ENCODE measurements at regions of chr4 and their contacts with region 1.

Region 1: GRCh38 chr4:101730291-101731117 is 60.0 kb upstream of the BANK1 start:
- DNase-seq: peak; percentile 86
- H3K4me3 ChIP-seq: no peak overlapping the region
- H3K27ac ChIP-seq: no peak overlapping the region
- H3K4me1 ChIP-seq: no peaks in the 10 kb centered on the region
- H3K27me3 ChIP-seq: no peaks in the 10 kb centered on the region
- CTCF ChIP-seq: peak; percentile 70

Region 2: DNA sequence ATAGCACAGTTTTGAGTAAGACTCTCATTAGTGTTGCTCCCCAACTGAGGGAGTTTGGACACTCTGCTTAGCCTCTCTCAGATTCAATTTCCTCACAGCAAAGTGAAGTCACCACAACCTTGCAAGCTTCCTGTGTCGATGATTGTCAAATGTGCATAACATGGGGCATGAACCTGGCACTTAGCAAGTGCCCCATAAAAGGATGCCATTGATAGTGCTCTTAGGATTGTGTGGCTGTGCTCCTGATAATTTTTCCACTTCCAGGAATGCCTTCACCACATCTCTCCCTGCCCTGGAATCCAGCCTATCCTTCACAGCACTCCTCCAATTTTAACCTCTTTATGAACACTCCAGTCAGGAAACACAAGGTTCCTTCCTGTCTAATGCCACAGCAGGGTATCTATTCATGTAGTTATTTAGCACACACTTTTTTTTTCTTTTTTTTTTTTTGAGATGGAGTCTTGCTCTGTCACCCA is 692.5 kb before region 1 on chr4:
- CTCF ChIA-PET with region 1: no interaction called
- POLR2A ChIA-PET with region 1: no interaction called
- intact Hi-C with region 1: loop called (anchors 10 kb)
- DNase-seq: peak; percentile 97
- H3K4me3 ChIP-seq: no peak overlapping the region
- H3K27ac ChIP-seq: peak overlapping the region; percentile 14
- H3K4me1 ChIP-seq: peaks cover 45% of the 10 kb centered on the region
- H3K27me3 ChIP-seq: no peaks in the 10 kb centered on the region
- CTCF ChIP-seq: no peak

Region 3: DNA sequence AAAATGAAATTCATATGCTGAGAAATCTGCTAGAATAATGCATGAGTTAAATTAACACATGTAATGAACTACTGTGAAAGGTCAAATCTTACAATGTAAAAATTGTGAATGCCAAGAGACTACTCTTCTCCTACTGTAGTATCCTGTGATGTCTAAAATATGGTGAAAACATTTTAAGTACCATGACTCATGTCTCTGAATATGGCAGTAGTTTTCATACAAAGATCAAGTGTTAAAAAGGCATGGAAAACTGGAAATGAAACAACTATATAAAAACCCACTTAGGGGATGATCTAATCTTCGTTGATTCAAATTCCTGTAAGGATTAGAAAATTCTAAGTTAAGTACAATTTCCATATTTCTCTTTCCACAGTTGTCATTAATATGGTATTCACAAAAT is 604.4 kb before region 1 on chr4:
- CTCF ChIA-PET with region 1: no interaction called
- POLR2A ChIA-PET with region 1: no interaction called
- intact Hi-C with region 1: no loop called
- DNase-seq: peak; percentile 62
- H3K4me3 ChIP-seq: no peak overlapping the region
- H3K27ac ChIP-seq: peak overlapping the region; percentile 14
- H3K4me1 ChIP-seq: peaks cover 33% of the 10 kb centered on the region
- H3K27me3 ChIP-seq: no peaks in the 10 kb centered on the region
- CTCF ChIP-seq: no peak

Region 4: DNA sequence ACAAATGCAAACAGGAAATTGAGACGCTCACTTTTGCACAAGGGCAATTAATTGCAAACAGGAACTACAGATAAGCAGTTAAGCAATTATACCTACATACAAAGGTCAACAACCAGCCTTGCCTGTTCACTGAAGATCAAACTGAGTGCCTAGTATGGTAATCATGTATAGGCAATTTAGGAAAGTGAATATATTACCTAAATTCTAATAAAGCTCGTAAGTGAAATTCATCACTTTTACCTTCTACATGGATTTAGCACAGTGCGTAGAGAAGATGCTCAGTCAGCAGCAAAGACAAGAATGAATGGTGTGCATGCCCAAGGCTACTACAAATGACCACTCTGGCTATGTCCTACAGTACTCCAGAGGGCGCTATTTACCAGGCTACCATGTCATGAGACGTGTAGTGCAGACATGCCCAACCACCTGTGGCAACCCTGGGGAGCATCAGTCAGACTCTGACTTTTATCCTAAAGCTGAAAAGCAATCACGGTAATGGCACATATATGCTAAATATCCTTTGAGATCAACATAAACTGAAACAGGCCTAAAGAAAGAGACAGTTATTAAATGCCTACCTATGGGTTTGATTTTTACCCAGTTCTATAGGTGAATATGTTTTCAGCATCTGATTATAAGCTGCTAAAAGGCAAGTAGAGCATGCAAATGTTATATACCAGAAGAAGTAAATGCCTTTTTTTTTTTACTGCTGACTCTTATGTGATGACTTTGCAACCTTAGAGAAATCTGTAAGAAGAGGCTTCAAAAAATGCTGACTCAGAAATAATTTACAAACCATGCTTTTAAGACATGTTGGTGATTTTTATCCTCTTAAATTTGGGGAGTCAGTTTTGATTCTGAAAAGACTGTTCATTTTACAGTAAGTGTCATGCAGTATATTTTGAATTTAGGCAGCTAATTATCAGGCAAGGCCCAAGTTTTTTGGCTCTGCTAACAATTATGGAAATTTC is 561.2 kb before region 1 on chr4:
- CTCF ChIA-PET with region 1: no interaction called
- POLR2A ChIA-PET with region 1: no interaction called
- intact Hi-C with region 1: loop called (anchors 5 kb)
- DNase-seq: peak; percentile 82
- H3K4me3 ChIP-seq: no peak overlapping the region
- H3K27ac ChIP-seq: no peak overlapping the region
- H3K4me1 ChIP-seq: peaks cover 49% of the 10 kb centered on the region
- H3K27me3 ChIP-seq: no peaks in the 10 kb centered on the region
- CTCF ChIP-seq: peak; percentile 83

Region 5: DNA sequence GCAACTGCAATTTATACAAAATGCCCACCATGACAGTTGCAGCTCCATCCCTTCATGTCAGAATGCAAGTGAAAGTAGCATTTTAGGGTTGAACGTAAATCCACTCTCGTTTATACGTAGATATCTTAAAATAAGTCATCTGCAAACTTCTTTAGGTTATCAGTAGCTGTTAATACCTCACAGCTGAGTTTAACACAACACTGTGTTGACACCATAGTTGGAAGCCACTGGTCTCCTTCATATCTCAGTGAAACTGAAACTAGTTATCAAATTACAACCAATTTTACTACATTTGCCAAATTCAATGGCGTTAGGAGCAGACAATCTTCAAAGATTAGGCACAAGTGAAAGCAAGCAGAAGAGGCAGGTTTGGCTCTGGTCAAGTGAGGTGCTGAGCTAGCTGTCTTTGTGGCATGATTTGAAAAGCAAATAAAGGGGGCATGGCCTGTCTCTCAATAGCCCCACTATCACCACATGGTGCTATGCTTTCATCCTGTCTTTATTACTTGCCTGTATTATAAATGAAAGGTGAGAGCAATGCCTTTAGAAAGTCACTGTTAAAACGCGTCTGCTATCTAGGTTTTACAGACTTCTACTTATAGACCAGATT is 395.4 kb before region 1 on chr4:
- CTCF ChIA-PET with region 1: no interaction called
- POLR2A ChIA-PET with region 1: no interaction called
- intact Hi-C with region 1: loop called (anchors 5 kb)
- DNase-seq: no peak
- H3K4me3 ChIP-seq: no peak overlapping the region
- H3K27ac ChIP-seq: no peak overlapping the region
- H3K4me1 ChIP-seq: peaks cover 70% of the 10 kb centered on the region
- H3K27me3 ChIP-seq: no peaks in the 10 kb centered on the region
- CTCF ChIP-seq: no peak

Region 6: GRCh38 chr4:101347557-101348366 is 382.7 kb before region 1 on chr4:
- CTCF ChIA-PET with region 1: no interaction called
- POLR2A ChIA-PET with region 1: no interaction called
- intact Hi-C with region 1: loop called (anchors 5 kb)
- DNase-seq: peak; percentile 98
- H3K4me3 ChIP-seq: peak overlapping the region; percentile 98
- H3K27ac ChIP-seq: peak overlapping the region; percentile 91
- H3K4me1 ChIP-seq: peaks cover 31% of the 10 kb centered on the region
- H3K27me3 ChIP-seq: no peaks in the 10 kb centered on the region
- CTCF ChIP-seq: 0 out of 2 replicates have a peak, but pooled peaks have one; percentile 14

Region 7: GRCh38 chr4:102263011-102263787 is 532.7 kb after region 1 on chr4:
- CTCF ChIA-PET with region 1: no interaction called
- POLR2A ChIA-PET with region 1: no interaction called
- intact Hi-C with region 1: loop called (anchors 10 kb)
- DNase-seq: peak; percentile 56
- H3K4me3 ChIP-seq: no peak overlapping the region
- H3K27ac ChIP-seq: no peak overlapping the region
- H3K4me1 ChIP-seq: no peaks in the 10 kb centered on the region
- H3K27me3 ChIP-seq: no peaks in the 10 kb centered on the region
- CTCF ChIP-seq: peak; percentile 64

Measured in A673 (cell line).